ENCODE measurements at regions of chr5 and their contacts with region 1.

Region 1: GRCh38 chr5:97004423-97005060 is 68.7 kb downstream of the LNPEP start:
- DNase-seq: no peak
- ATAC-seq: no peak
- H3K4me3 ChIP-seq: no peak overlapping the region
- H3K27ac ChIP-seq: no peak overlapping the region
- H3K4me1 ChIP-seq: peaks cover 5% of the 10 kb centered on the region
- H3K27me3 ChIP-seq: no peaks in the 10 kb centered on the region
- CTCF ChIP-seq: no peak
- EP300 ChIP-seq: no peak
- POLR2A ChIP-seq: no peak
- RAD21 ChIP-seq: no peak

Region 2: GRCh38 chr5:97037819-97038218 is 33.3 kb after region 1 on chr5:
- CTCF ChIA-PET with region 1: no interaction called
- POLR2A ChIA-PET with region 1: no interaction called
- in situ Hi-C with region 1: no loop called
- intact Hi-C with region 1: loop called (anchors 5 kb)
- DNase-seq: no peak
- ATAC-seq: no peak
- H3K4me3 ChIP-seq: no peak overlapping the region
- H3K27ac ChIP-seq: no peak overlapping the region
- H3K4me1 ChIP-seq: peaks cover 17% of the 10 kb centered on the region
- H3K27me3 ChIP-seq: no peaks in the 10 kb centered on the region
- CTCF ChIP-seq: no peak
- EP300 ChIP-seq: no peak
- POLR2A ChIP-seq: no peak
- RAD21 ChIP-seq: no peak